Aorta (tissue), 5 donors: ENCODE measurements at regions of chr19 and their contacts with region 1.

Region 1: DNA sequence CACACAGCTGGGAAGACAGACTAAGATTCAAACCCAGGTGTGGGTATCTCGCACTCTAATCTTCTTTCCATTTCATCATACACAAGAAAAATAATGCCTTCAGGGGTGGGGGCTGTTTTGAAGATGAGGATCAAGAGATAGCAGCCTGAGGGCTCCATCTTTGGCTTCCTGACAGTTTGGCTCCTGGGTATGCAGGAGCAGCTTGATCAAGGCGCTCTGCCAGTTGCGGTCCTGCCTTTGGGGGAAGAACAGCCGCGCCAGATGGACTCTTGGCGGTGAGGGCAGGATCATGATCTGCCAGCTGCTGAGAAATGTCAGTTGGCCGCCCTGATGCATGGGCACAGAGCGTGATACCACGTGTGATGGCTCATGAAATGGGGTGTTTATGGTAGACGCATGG is 119.1 kb downstream of the IER2 start:
- DNase-seq: no peak
- ATAC-seq: no peak
- H3K4me3 ChIP-seq: no peak overlapping the region
- H3K27ac ChIP-seq: no peak overlapping the region
- H3K4me1 ChIP-seq: no peaks in the 10 kb centered on the region
- H3K27me3 ChIP-seq: no peaks in the 10 kb centered on the region

Region 2: DNA sequence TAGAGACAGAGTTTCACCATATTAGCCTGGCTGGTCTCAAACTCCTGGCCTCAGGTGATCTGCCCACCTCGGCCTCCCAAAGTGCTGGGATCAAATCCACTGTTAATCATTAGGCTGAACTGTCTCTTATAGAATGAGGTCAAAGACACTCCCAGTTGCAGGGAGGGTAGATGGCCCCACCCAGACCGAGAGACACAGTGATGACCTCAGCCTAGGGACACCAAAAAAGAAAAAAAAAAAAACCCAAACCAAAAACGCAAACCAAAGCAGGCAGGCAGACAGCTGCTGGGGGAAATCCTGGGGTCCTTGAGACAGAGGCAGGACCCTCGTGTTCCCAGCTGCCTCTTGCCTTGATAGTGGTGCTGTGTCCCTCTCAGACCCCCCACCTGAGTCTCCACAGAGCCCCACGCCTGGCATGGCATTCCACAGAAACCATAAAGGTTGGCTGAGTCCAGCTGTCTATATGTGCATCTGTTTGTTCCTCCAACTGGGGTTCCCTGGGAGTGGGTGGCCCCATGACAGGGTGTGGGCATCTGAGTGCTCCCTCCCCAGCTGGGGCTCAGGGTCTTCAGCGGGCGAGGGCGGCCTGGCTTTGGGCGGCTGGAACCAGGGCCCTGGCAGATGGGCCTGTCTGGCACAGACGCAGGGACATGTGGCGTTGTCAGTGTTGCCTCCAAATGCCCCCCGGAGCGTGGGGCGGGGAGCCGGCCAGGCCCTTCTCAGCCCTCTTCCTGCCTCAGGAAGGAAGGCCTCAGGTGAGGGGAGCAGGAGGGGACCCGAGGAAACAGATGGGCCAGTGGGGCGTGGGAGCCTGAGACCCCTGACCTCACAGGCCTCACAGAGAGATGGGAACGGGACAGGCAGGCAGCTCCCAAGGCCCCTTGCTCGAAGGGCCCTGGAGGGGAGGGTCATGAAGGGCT is 294.8 kb before region 1 on chr19:
- intact Hi-C with region 1: loop called (anchors 2 to 5 kb)
- DNase-seq: no peak
- ATAC-seq: no peak
- H3K4me3 ChIP-seq: no peak overlapping the region
- H3K27ac ChIP-seq: no peak overlapping the region
- H3K4me1 ChIP-seq: no peaks in the 10 kb centered on the region
- H3K27me3 ChIP-seq: no peaks in the 10 kb centered on the region

Region 3: DNA sequence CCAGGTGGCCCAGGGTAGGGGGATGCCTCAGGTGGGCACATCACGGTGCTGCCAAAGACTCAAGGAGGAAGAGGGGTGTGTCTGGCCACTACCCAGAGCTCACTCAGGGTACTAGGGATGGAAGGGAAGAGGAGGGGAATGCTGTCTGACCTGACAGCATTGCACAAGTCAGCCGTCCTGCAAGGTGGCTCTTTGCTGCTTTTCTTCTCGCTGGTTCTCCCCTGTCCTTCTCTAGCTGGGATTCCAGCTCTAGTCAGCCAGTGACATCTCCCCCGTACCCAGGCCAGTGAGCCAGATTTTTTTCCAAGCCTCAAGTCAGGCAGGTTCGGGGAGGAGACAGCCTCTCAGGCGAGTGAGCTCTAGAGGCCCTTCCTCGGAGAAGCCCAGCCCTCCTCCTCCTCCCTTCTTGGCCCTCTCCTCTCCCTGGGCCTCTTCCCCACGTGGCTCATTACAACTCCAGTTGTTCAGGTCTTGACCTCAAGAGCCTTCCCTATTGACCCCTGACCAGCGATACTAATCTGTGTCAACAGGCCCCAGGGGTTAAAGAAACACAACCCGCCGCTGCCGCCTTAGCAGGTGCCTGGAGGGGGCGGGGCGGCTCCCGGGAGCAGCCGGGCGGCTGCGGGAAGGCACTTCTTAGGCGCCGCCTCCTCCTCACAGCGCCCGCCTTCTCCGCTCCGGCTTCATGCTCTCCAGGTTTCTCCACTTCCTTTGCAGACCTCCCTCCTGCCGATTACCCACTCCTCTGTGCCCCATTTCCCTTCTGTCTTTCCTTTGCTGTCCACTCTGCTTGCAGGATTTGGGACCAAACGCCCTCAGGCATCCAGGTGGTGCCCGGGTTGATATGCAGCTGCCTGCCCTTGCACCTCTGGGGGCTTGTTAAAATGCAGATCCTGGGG is 217.8 kb before region 1 on chr19:
- intact Hi-C with region 1: no loop called
- DNase-seq: peak; percentile 72 to 87
- ATAC-seq: no peak
- H3K4me3 ChIP-seq: no peak overlapping the region
- H3K27ac ChIP-seq: peak overlapping the region in 1 of 2 donors; percentile 88
- H3K4me1 ChIP-seq: peaks cover 4 to 13% of the 10 kb centered on the region in 2 donors
- H3K27me3 ChIP-seq: no peaks in the 10 kb centered on the region

Region 4: GRCh38 chr19:13329766-13330165 is 60.4 kb after region 1 on chr19:
- intact Hi-C with region 1: no loop called
- DNase-seq: no peak
- ATAC-seq: no peak
- H3K4me3 ChIP-seq: no peak overlapping the region
- H3K27ac ChIP-seq: no peak overlapping the region
- H3K4me1 ChIP-seq: no peaks in the 10 kb centered on the region
- H3K27me3 ChIP-seq: no peaks in the 10 kb centered on the region

Region 5: GRCh38 chr19:13738073-13738472 is 468.7 kb after region 1 on chr19:
- intact Hi-C with region 1: no loop called
- DNase-seq: no peak
- ATAC-seq: no peak
- H3K4me3 ChIP-seq: no peak overlapping the region
- H3K27ac ChIP-seq: no peak overlapping the region
- H3K4me1 ChIP-seq: no peaks in the 10 kb centered on the region
- H3K27me3 ChIP-seq: no peaks in the 10 kb centered on the region